Right lobe of liver (tissue), 6 donors: ENCODE measurements at regions of chr10 and their contacts with region 1.

Region 1: GRCh38 chr10:112314822-112315474 is 31.7 kb downstream of the TECTB start:
- DNase-seq: peak; percentile 79 to 83 (median 83)
- ATAC-seq: peak; percentile 83 to 94 (median 86)
- H3K4me3 ChIP-seq: no peak overlapping the region
- H3K27ac ChIP-seq: no peak overlapping the region
- H3K4me1 ChIP-seq: peaks cover 0 to 23% (median 0%) of the 10 kb centered on the region in 4 donors
- H3K27me3 ChIP-seq: no peaks in the 10 kb centered on the region
- CTCF ChIP-seq: peak; percentile 92 to 95 (median 94)
- POLR2A ChIP-seq: no peak

Region 2: DNA sequence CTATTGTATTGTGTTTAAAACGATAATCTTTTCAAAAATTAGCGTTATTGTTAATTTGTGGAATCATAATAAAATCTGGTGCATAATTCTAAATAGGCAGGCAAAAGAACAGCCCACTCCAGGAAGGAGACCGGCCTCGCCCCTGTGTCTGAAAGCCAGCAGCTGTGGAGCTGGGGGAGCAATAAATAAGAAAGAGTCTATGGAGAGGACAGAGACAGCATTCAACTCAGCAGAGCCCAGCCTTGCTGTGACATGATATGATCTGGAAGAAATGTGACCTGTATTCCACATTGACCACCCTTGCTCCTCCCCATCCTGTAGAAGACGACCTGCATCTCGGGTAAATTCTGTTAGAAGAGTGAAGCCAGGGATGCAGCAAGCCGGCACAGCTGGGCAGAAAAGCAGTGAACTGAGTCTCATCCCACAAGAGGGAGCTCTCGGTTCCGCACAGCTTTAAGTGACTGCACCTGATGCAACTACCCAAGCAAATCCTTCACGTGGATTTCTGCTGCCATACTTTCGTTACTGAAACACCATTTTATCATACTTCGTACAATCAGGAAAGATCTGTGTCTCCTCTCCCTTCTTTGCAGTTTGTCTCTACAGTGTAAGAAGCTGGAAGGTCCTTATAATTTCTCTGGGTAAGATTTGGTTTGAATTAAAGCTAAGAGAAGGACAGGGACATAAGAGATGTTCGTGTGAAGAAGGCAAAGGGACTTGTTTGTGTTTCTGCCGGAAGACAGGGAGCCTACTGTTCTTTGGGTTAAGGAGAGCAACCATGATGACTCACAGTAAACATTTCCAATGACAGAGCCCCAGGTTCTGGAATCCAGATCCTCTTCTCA is 558.5 kb before region 1 on chr10:
- intact Hi-C with region 1: loop called in 1 of 2 experiments (anchors 10 kb)
- DNase-seq: peak; percentile 46 to 60 (median 60)
- ATAC-seq: peak; percentile 91 to 96 (median 94)
- H3K4me3 ChIP-seq: no peak overlapping the region
- H3K27ac ChIP-seq: no peak overlapping the region
- H3K4me1 ChIP-seq: no peaks in the 10 kb centered on the region
- H3K27me3 ChIP-seq: no peaks in the 10 kb centered on the region
- CTCF ChIP-seq: peak; percentile 52 to 68 (median 57)
- POLR2A ChIP-seq: no peak

Region 3: DNA sequence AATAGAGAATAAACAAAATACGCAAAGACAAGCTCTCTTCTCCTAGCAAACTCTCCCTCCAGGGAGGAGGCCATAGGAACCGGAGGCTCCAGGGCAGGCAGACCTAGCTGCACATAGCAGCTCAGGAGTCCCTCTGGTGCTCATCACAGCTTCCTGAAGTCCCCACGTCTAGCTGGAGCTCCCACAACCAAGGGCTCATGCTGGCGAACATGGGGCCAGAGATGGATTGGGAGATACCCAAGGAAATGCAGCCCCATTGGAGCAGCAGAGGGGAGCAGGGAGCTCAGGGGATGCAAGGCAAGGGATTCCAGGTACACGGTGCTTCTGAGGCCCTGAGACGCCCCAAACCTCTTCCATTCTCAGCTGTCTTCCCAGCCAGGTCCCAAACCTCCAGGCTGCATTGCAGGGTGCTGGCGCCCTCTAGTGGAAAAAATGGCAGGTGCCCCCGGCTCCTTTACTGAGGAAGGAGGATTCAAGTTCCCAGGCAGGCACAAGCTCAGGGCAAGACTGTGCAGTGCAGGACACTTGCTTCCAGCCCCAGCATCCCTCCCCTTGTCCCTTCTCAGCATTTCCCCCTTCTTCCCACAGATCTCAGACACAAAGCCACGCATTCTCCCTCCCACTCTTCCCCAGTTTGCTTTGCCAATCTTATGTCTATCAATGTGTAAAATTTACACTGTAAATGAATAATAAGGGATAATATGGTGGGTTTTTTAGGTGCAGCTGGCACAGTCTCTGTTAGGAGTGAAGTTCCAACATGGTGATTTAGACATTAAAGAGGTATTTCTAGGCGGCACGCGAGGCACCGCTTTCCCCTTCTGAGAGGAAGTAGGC is 177.6 kb before region 1 on chr10:
- intact Hi-C with region 1: loop called in 1 of 2 experiments (anchors 10 kb)
- DNase-seq: peak; percentile 62 to 70 (median 69)
- ATAC-seq: peak; percentile 53 to 66 (median 56)
- H3K4me3 ChIP-seq: no peak overlapping the region
- H3K27ac ChIP-seq: no peak overlapping the region
- H3K4me1 ChIP-seq: no peaks in the 10 kb centered on the region
- H3K27me3 ChIP-seq: no peaks in the 10 kb centered on the region
- CTCF ChIP-seq: peak; percentile 76 to 93 (median 91)
- POLR2A ChIP-seq: no peak